ENCODE measurements at regions of chr12 and their contacts with region 1.

Region 1: DNA sequence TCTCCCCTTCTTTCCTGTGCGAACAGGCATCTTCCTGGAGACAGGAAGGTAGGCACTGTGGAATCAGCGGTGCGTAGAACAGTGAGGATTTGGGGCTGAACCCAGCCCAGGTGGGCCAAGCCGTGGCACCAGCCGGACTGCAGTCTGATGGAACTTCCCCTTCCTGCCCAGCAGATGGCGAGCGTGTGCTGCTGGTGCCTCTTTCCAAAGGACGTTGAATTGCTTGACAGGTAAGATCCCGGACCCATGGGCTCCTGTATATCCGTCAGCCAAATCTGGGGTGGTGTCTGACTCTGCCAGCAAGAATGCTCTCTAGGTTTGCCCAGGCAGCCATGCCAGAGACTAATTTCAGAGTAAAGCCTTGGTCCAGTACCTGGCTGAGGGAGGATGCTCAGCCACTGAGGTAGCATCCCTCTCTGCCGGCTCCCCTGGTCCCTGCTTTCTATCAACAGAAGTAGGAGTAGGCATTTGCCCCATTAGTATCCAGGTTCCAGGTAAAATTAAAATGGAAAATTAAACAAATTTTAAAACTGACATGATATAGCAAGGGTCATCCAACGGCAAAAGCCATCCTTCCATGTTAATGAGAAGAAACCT is 21.1 kb upstream of the KCNA5 start:
- DNase-seq: peak in 4 of 5 donors; percentile 62 to 76 (median 65)
- H3K4me3 ChIP-seq: no peak overlapping the region
- H3K27ac ChIP-seq: no peak overlapping the region
- H3K4me1 ChIP-seq: no peaks in the 10 kb centered on the region
- H3K27me3 ChIP-seq: no peaks in the 10 kb centered on the region
- CTCF ChIP-seq: peak; percentile 87

Region 2: DNA sequence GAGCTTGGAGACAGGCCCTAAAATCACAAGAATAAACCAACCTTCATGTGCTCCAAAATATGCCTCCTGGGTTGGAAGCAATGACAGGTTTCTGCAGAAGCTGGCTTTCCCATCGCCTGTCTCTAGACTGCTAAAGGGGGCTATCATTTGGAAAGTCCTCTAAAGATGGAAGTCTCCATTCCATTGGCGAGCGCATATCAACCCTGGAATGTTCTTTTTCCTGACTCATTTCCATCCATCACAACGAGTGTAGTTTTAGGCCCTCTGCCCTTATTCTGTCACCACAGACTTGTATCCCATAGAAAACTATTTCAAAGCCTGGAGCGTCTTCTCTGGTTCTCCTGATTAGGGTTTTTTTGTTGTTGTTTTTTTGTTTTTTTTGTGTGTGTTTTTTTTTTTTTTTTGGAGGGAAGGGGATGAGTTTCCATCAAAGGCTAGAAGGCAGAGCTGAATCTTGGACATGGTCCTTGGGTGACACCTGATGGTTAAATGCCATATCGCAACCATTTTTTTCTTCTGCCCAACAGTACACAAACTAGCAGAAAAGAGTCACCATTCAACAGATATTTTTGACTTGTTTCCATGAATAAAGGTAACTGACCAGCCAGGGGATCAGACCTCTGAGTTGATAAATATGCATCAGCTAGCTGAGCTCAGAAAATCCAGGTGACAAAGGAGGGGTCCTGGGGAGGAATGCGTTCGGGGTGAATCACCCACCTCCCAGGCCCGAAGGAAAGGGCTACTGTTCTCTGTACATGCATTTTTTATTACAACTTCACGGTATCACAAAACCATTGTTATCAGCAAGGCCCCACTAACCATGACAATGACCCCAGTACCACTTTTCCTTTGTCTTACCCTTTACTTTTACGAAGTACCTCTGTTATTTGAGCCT is 61.6 kb after region 1 on chr12:
- intact Hi-C with region 1: loop called (anchors 2 kb)
- DNase-seq: peak in 3 of 5 donors; percentile 68 to 82 (median 80)
- H3K4me3 ChIP-seq: no peak overlapping the region
- H3K27ac ChIP-seq: no peak overlapping the region
- H3K4me1 ChIP-seq: no peaks in the 10 kb centered on the region
- H3K27me3 ChIP-seq: no peaks in the 10 kb centered on the region
- CTCF ChIP-seq: peak; percentile 63

Measured in kidney (tissue), 22 donors.